Activated CD4-positive, alpha-beta T cell treated with anti-CD3 and anti-CD28 coated beads, Interleukin-2, amount 10 ng/mL, durations not matched to agents 7 days and 5 days (primary cell): ENCODE measurements at regions of chr17 and their contacts with region 1.

Region 1: GRCh38 chr17:42019509-42020404 is at the start of gene NKIRAS2:
- DNase-seq: peak; percentile 95
- H3K4me3 Mint-ChIP-seq: peak within 1 kb of the TSS; percentile 99
- H3K27ac Mint-ChIP-seq: peak within 1 kb of the TSS; percentile 90
- H3K4me1 Mint-ChIP-seq: peaks cover 63% of the 10 kb centered on the region
- H3K27me3 Mint-ChIP-seq: no peaks in the 10 kb centered on the region
- total RNA-seq, gene NKIRAS2: 23.3 to 25.5 TPM

Region 2: GRCh38 chr17:42009170-42009569 is 10.6 kb before region 1 on chr17:
- CTCF ChIA-PET with region 1: interaction called, 62 read pairs
- POLR2A ChIA-PET with region 1: no interaction called
- DNase-seq: no peak
- H3K4me3 Mint-ChIP-seq: no peak overlapping the region
- H3K27ac Mint-ChIP-seq: peak overlapping the region; percentile 39
- H3K4me1 Mint-ChIP-seq: peaks cover 52% of the 10 kb centered on the region
- H3K27me3 Mint-ChIP-seq: no peaks in the 10 kb centered on the region

Region 3: DNA sequence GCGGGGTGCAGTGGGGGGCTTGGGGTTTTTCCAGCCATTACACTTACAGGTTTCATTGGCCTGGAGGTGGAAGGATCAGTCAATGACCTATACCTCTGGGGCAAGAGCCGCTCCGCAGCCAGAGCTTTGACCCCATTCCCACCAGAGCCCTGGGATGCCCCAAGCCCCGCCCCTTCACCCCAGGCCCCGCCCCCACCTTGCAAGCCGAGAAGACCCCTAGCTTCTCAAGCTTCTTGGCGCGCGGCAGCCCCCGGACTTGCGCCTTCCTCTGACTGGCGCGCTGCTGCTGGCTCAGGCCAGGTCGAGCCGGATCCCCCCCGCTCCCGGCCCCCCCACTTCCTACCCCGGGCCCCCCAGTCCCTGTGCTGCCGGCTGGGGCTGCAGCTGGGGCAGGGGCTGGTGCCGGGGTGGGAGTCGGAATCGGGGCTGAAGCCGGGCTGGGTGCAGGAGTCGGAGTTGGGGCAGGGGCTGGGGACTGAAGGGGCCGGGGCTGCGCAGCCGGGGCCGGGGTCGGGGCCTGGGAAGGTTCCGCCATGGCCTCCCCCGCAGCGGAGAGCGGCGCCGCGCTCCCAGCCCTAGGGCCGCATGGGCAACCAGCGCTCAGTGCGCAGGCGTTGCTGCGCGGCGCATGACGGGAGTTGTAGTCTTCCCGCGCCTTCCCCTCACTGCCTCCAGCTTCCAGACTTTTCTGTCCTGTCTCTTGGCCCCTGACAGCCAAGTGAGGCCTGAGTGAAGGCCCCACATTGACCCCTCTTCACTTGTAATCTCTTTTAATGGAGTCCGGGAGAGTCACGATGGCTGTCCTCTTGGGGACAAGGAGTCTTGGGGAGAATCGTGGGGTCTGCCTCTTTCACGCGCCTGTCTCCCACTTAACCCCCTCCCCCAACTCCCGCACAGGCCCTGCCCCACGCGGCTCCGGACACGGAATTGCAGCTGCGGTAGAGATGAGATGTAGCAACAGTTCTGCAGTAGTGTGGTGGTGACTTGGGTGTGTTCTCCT is 101.3 kb after region 1 on chr17 and contains the start of gene KAT2A:
- CTCF ChIA-PET with region 1: interaction called, 71 read pairs
- POLR2A ChIA-PET with region 1: interaction called, 3 read pairs
- DNase-seq: peak; percentile 75
- H3K4me3 Mint-ChIP-seq: peak within 1 kb of the TSS; percentile 67
- H3K27ac Mint-ChIP-seq: peak within 1 kb of the TSS; percentile 73
- H3K4me1 Mint-ChIP-seq: peaks cover 31% of the 10 kb centered on the region
- H3K27me3 Mint-ChIP-seq: no peaks in the 10 kb centered on the region
- total RNA-seq, gene KAT2A: 47.9 to 48.3 TPM

Region 4: GRCh38 chr17:42163113-42163512 is 143.4 kb after region 1 on chr17:
- CTCF ChIA-PET with region 1: no interaction called
- POLR2A ChIA-PET with region 1: no interaction called
- DNase-seq: peak; percentile 41
- H3K4me3 Mint-ChIP-seq: no peak overlapping the region
- H3K27ac Mint-ChIP-seq: no peak overlapping the region
- H3K4me1 Mint-ChIP-seq: no peaks in the 10 kb centered on the region
- H3K27me3 Mint-ChIP-seq: no peaks in the 10 kb centered on the region